ENCODE measurements at regions of chr2 and their contacts with region 1.

Region 1: GRCh38 chr2:197113275-197113711 is 186.8 kb upstream of the PGAP1 start:
- DNase-seq: no peak
- H3K4me3 ChIP-seq: no peak overlapping the region
- H3K27ac ChIP-seq: no peak overlapping the region
- H3K27me3 ChIP-seq: no peaks in the 10 kb centered on the region
- CTCF ChIP-seq: peak; percentile 63

Region 2: DNA sequence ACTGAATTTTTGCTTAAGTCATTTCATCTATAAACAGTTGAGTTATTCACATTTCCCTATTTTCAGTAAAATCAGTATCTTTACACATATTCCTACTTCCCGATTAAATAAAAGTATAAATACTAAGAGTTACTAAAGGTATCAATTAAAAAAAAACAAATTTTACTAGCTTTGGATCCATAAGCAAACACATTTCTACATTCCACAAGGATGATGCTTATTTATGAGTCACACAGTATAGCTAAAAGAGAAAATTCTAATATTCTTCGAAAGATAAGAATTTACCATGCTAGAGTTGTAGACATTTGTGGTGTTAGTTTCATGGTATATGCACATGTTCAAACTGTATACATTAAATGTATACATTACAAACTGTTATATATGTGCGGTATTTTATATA is 210.5 kb before region 1 on chr2:
- CTCF ChIA-PET with region 1: no interaction called
- POLR2A ChIA-PET with region 1: no interaction called
- DNase-seq: no peak
- H3K4me3 ChIP-seq: no peak overlapping the region
- H3K27ac ChIP-seq: no peak overlapping the region
- H3K27me3 ChIP-seq: no peaks in the 10 kb centered on the region
- CTCF ChIP-seq: no peak

Region 3: DNA sequence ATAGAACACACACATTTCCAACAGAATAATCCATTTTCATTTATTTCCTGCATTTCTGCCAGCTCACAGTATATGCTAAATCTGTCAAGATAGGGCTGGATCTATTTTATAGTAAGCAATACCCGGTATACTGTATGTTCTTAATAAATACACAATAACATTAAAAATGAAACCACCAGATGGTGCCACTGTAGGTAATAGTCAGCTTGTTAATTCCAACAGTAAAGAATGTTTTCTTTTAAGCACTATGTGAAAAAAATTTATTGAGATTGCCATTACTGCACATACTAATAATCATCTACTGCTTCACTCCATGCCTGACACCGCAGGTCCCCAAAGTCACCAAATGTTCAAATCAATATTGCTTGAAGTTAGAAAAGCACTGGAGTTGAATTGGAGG is 55.3 kb before region 1 on chr2:
- CTCF ChIA-PET with region 1: no interaction called
- POLR2A ChIA-PET with region 1: no interaction called
- DNase-seq: no peak
- H3K4me3 ChIP-seq: no peak overlapping the region
- H3K27ac ChIP-seq: no peak overlapping the region
- H3K27me3 ChIP-seq: no peaks in the 10 kb centered on the region
- CTCF ChIP-seq: no peak

Region 4: DNA sequence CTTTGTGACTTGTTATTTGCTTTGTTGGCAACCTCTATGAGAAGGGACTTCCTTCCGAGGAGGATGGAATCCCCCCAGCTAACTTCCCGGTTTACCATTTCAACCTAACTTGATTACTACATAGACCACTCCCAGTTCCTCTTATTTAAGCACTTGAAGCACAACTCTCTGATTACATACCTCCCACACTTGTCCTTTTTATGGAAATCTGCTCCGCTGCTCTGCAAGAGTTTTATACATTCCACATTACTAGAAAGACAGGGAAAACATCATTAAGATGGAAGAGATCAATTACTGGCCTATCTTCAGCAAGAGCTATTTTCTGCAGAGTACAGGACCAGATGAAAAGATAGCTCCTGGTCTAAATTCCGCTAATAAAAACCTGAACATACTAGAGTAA is 26.8 kb before region 1 on chr2:
- CTCF ChIA-PET with region 1: interaction called, 12 read pairs
- POLR2A ChIA-PET with region 1: no interaction called
- DNase-seq: no peak
- H3K4me3 ChIP-seq: no peak overlapping the region
- H3K27ac ChIP-seq: no peak overlapping the region
- H3K27me3 ChIP-seq: no peaks in the 10 kb centered on the region
- CTCF ChIP-seq: no peak

Region 5: DNA sequence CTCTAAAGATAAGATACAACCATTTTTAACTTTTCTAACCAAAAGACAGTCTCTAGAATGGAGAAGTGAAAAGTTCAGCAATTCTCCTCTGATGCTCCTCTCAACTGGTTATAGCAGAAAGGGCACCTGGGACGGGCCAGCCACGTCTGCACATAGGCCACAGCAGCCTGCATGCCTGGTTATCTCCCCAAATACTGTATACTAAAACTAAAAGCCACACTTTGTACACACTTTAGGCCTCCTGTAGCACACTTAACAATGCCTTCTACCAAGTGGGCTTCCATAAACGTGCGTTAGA is 18.2 kb after region 1 on chr2:
- CTCF ChIA-PET with region 1: interaction called, 37 read pairs
- POLR2A ChIA-PET with region 1: no interaction called
- DNase-seq: no peak
- H3K4me3 ChIP-seq: no peak overlapping the region
- H3K27ac ChIP-seq: no peak overlapping the region
- H3K27me3 ChIP-seq: no peaks in the 10 kb centered on the region
- CTCF ChIP-seq: no peak

Region 6: GRCh38 chr2:197159661-197160211 is 46.4 kb after region 1 on chr2:
- CTCF ChIA-PET with region 1: interaction called, 14 read pairs
- POLR2A ChIA-PET with region 1: no interaction called
- DNase-seq: no peak
- H3K4me3 ChIP-seq: no peak overlapping the region
- H3K27ac ChIP-seq: no peak overlapping the region
- H3K27me3 ChIP-seq: no peaks in the 10 kb centered on the region
- CTCF ChIP-seq: no peak

Region 7: GRCh38 chr2:197191177-197191939 is 78.1 kb after region 1 on chr2:
- CTCF ChIA-PET with region 1: interaction called, 22 read pairs
- POLR2A ChIA-PET with region 1: no interaction called
- DNase-seq: no peak
- H3K4me3 ChIP-seq: no peak overlapping the region
- H3K27ac ChIP-seq: no peak overlapping the region
- H3K27me3 ChIP-seq: no peaks in the 10 kb centered on the region
- CTCF ChIP-seq: peak; percentile 69

Region 8: GRCh38 chr2:197327472-197328098 is 214.3 kb after region 1 on chr2:
- CTCF ChIA-PET with region 1: interaction called, 10 read pairs
- POLR2A ChIA-PET with region 1: no interaction called
- DNase-seq: no peak
- H3K4me3 ChIP-seq: no peak overlapping the region
- H3K27ac ChIP-seq: no peak overlapping the region
- H3K27me3 ChIP-seq: peaks cover 5% of the 10 kb centered on the region
- CTCF ChIP-seq: no peak

Region 9: DNA sequence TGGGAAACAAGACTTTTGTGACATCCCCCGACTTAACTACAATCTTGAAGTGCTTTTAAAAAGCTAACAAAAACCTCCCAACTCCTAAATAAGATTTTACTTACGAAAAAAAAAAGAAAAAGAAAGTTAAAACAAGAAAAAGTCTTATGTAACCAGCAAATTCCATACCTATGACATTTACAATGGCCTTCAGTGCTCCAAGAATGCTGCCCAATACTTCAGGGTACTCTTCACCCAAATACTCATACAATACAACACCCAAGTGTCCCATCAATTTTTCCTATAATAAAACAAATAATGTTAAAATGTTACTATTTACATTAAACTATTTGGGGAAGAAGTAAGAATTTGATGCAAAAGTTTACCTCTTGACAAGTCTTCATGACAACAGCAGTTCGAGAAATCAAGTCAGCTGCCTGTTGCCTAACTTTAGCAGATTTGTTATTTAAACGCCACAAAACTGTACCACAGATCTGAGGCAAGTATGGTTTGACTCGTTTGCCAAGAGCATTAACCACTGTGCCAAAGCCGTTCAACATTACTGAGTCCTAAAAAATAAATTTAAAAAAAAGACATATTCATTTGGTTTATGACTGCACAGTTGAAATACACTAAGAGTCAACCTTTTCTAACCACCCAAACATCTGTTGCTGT is 286.7 kb after region 1 on chr2:
- CTCF ChIA-PET with region 1: interaction called, 11 read pairs
- POLR2A ChIA-PET with region 1: no interaction called
- DNase-seq: no peak
- H3K4me3 ChIP-seq: no peak overlapping the region
- H3K27ac ChIP-seq: no peak overlapping the region
- H3K27me3 ChIP-seq: no peaks in the 10 kb centered on the region
- CTCF ChIP-seq: no peak

Region 10: GRCh38 chr2:197423307-197423706 is 310.0 kb after region 1 on chr2:
- CTCF ChIA-PET with region 1: no interaction called
- POLR2A ChIA-PET with region 1: no interaction called
- DNase-seq: no peak
- H3K4me3 ChIP-seq: no peak overlapping the region
- H3K27ac ChIP-seq: no peak overlapping the region
- H3K27me3 ChIP-seq: no peaks in the 10 kb centered on the region
- CTCF ChIP-seq: no peak

Measured in AG04450 (cell line).